Endothelial cell of umbilical vein (primary cell): ENCODE measurements at regions of chr1 and their contacts with region 1.

Region 1: GRCh38 chr1:42586016-42586415 is 72.2 kb upstream of the PPIH start:
- DNase-seq: no peak
- H3K4me3 ChIP-seq: no peak overlapping the region
- H3K27ac ChIP-seq: no peak overlapping the region
- H3K4me1 ChIP-seq: no peaks in the 10 kb centered on the region
- H3K27me3 ChIP-seq: peaks cover 0 to 6% of the 10 kb centered on the region in 2 experiments
- CTCF ChIP-seq: no peak
- POLR2A ChIP-seq: no peak

Region 2: DNA sequence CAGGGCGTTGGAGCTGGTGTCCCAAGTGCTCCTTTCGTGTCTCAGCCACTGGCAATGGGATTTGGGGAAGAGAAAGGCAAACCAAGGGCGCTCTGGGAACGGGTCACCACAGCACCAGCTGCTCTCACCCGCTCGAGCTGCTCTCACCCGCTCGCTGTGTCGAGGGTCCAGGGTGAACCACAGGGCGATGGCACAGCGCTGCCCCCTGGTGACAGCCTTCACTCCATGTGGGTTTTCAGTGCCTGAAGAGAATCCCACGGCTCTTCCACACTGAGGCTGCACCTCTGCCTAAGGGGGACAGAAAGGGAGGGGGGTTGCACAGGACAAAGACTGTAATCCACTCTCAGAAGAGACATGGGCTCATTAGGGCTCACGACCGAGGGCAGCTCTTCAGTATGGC is 161.1 kb after region 1 on chr1:
- CTCF ChIA-PET with region 1: interaction called, 13 read pairs
- POLR2A ChIA-PET with region 1: no interaction called
- dilution Hi-C with region 1: no loop called
- intact Hi-C with region 1: no loop called
- DNase-seq: peak; percentile 22
- H3K4me3 ChIP-seq: no peak overlapping the region
- H3K27ac ChIP-seq: no peak overlapping the region
- H3K4me1 ChIP-seq: no peaks in the 10 kb centered on the region
- H3K27me3 ChIP-seq: no peaks in the 10 kb centered on the region
- CTCF ChIP-seq: peak; percentile 52 to 78
- POLR2A ChIP-seq: no peak